Activated CD4-positive, alpha-beta memory T cell treated with anti-CD3 and anti-CD28 coated beads, Interleukin-2, amount 10 ng/mL, durations not matched to agents 7 days and 5 days (primary cell): ENCODE measurements at regions of chr21 and their contacts with region 1.

Region 1: GRCh38 chr21:33542640-33543504 is at the start of gene SON:
- DNase-seq: peak; percentile 99
- H3K4me3 Mint-ChIP-seq: peak within 1 kb of the TSS; percentile 90
- H3K27ac Mint-ChIP-seq: peak within 1 kb of the TSS; percentile 98
- H3K4me1 Mint-ChIP-seq: peaks cover 33% of the 10 kb centered on the region
- H3K27me3 Mint-ChIP-seq: no peaks in the 10 kb centered on the region
- total RNA-seq, gene SON: 279 to 290 TPM

Region 2: DNA sequence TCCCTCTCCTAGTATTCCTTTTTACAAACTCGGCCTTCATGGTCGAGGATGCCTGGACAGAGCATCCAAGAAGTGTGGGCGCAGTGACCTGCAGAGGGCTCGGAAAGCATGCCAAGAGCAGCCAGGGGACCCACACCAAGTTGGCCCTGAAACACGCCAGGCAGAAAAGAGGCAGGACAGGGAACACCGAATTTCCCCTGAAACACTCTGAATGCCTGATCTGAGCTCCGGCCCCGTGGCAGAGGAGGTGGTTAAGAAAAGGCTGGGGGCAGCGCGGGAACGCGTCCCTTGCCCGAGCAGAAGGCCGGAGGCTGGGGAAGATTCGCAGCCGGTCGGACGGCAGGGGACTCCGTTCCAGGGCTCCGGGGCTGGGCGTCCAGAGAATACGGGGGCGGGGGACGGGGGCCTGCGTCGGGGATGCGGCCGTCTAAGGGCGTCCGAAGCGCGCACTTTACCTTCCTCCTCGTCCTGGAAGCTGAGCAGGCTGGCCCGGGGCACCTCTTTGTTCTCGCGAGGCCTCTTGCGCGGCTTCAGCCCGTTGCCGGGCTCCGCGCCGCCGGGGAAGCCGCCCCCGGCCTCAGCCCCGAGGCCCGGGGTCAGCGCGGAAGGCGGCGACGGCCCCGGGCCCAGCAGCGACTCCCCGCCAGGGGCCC is 771.9 kb before region 1 on chr21:
- CTCF ChIA-PET with region 1: no interaction called
- POLR2A ChIA-PET with region 1: interaction called, 11 read pairs
- DNase-seq: peak; percentile 69
- H3K4me3 Mint-ChIP-seq: peak overlapping the region; percentile 97
- H3K27ac Mint-ChIP-seq: peak overlapping the region; percentile 85
- H3K4me1 Mint-ChIP-seq: peaks cover 57% of the 10 kb centered on the region
- H3K27me3 Mint-ChIP-seq: peaks cover 3% of the 10 kb centered on the region

Region 3: GRCh38 chr21:33028773-33029384 is 514.0 kb before region 1 on chr21:
- CTCF ChIA-PET with region 1: no interaction called
- POLR2A ChIA-PET with region 1: no interaction called
- DNase-seq: peak; percentile 31
- H3K4me3 Mint-ChIP-seq: peak overlapping the region; percentile 27
- H3K27ac Mint-ChIP-seq: no peak overlapping the region
- H3K4me1 Mint-ChIP-seq: peaks cover 25% of the 10 kb centered on the region
- H3K27me3 Mint-ChIP-seq: peaks cover 66% of the 10 kb centered on the region

Region 4: GRCh38 chr21:33491373-33492102 is 51.3 kb before region 1 on chr21 and contains the start of gene DNAJC28:
- CTCF ChIA-PET with region 1: interaction called, 3 read pairs
- POLR2A ChIA-PET with region 1: interaction called, 25 read pairs
- DNase-seq: peak; percentile 92
- H3K4me3 Mint-ChIP-seq: peak within 1 kb of the TSS; percentile 95
- H3K27ac Mint-ChIP-seq: peak within 1 kb of the TSS; percentile 59
- H3K4me1 Mint-ChIP-seq: peaks cover 10% of the 10 kb centered on the region
- H3K27me3 Mint-ChIP-seq: peaks cover 21% of the 10 kb centered on the region
- total RNA-seq, gene DNAJC28: 0.55 to 0.60 TPM

Region 5: GRCh38 chr21:33578959-33579542 is 36.2 kb after region 1 on chr21:
- CTCF ChIA-PET with region 1: no interaction called
- POLR2A ChIA-PET with region 1: interaction called, 14 read pairs
- DNase-seq: no peak
- H3K4me3 Mint-ChIP-seq: no peak overlapping the region
- H3K27ac Mint-ChIP-seq: peak overlapping the region; percentile 48
- H3K4me1 Mint-ChIP-seq: peaks cover 5% of the 10 kb centered on the region
- H3K27me3 Mint-ChIP-seq: no peaks in the 10 kb centered on the region

Region 6: GRCh38 chr21:33608559-33608958 is 65.7 kb after region 1 on chr21:
- CTCF ChIA-PET with region 1: interaction called, 12 read pairs
- POLR2A ChIA-PET with region 1: interaction called, 5 read pairs
- DNase-seq: no peak
- H3K4me3 Mint-ChIP-seq: no peak overlapping the region
- H3K27ac Mint-ChIP-seq: no peak overlapping the region
- H3K4me1 Mint-ChIP-seq: no peaks in the 10 kb centered on the region
- H3K27me3 Mint-ChIP-seq: no peaks in the 10 kb centered on the region

Region 7: GRCh38 chr21:33668180-33668579 is 125.3 kb after region 1 on chr21:
- CTCF ChIA-PET with region 1: no interaction called
- POLR2A ChIA-PET with region 1: no interaction called
- DNase-seq: no peak
- H3K4me3 Mint-ChIP-seq: no peak overlapping the region
- H3K27ac Mint-ChIP-seq: no peak overlapping the region
- H3K4me1 Mint-ChIP-seq: no peaks in the 10 kb centered on the region
- H3K27me3 Mint-ChIP-seq: peaks cover 3% of the 10 kb centered on the region